HepG2 (cell line): ENCODE measurements at regions of chr9 and their contacts with region 1.

Region 1: DNA sequence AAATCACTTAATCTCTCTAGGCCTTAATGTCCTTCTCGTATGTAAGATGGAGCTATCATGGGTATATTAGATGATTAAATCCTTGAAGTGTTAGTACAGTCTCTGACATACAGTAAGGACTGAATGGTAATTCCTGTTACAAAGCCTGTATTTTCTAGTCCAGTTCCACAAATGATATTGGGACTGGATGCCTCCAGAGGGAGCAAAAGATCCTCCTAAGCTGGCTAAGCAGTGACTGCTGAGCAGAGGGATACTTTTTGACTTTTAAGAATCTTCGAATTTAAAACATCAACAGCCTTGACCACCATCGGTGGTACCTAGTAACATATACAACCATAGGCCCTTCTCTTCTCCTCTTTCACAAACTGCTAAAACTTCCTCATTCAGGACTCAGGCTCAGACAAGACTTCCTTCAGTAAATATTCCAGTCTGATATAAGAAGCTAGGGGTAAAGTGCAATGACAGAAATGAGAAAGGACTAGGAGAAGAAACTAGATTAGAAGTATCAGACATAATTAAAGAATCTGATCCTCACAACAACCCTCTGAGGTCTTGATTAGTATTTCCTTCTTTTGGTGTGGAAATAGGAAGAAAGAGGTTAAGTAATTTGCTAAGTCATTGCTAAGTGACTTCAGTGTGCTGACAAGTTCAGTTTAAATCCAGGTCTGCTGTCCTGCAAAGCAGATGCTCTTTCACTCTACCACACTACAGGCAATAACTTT is 13.9 kb downstream of the PTAR1 start:
- DNase-seq: peak; percentile 14
- ATAC-seq: peak; percentile 20; the same call in 1 of the 3 replicates
- H3K4me3 ChIP-seq: no peak overlapping the region
- H3K27ac ChIP-seq: peak overlapping the region; percentile 66
- H3K4me1 ChIP-seq: peaks cover 60% of the 10 kb centered on the region
- H3K27me3 ChIP-seq: no peaks in the 10 kb centered on the region
- CTCF ChIP-seq: peak; percentile 40
- EP300 ChIP-seq: no peak
- POLR2A ChIP-seq: no peak
- RAD21 ChIP-seq: no peak

Region 2: DNA sequence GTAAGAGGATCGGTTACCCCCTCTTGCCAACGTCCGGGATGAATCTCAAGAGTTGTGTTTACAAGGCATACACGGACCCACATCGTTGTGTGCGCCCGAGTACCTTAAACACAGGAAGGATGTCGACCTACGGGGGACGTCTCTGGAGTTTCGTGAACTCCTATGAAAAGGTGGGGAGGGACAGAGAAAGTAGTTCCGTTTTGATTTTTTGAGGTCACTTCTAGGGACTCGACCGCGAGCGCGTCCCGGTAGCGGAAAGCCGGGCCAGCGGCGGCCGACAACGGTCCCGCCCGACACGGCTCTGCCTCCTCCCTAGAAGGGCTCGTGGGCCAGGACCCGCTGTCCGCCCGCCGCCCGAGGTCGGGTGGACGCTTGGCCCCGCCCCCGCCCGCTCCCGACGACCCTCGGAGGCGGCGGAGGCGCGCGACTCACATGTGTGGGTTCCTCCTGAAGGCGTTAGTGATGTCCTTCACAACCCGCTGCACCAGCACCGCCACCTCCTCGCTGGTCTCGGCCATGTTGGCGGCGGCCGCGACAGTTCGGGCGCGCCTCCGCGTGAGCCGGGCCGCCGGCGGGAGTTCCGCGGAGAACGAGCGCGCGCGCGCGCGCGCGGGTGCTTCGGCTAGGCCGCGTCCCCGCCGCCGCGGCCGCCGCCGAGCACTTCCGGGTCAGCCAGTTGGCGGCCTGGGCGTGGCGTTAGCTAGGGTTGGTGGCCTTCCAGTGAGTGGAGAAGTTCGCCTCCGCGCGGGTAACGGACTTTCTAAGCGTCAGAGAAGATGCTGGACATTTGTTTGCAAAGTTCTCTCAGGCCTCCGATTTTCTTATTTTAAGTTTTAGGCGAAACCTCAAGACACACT is 13.8 kb after region 1 on chr9 and contains the start of gene PTAR1:
- CTCF ChIA-PET with region 1: no interaction called
- POLR2A ChIA-PET with region 1: interaction called, 31 read pairs
- in situ Hi-C with region 1: no loop called
- intact Hi-C with region 1: no loop called
- DNase-seq: peak; percentile 80
- ATAC-seq: peak; percentile 88
- H3K4me3 ChIP-seq: peak within 1 kb of the TSS; percentile 82 to 88 (median 85)
- H3K27ac ChIP-seq: peak within 1 kb of the TSS; percentile 91
- H3K4me1 ChIP-seq: peaks cover 46% of the 10 kb centered on the region
- H3K27me3 ChIP-seq: no peaks in the 10 kb centered on the region; a peak in 1 of 5 replicates
- CTCF ChIP-seq: 0 out of 2 replicates have a peak, but pooled peaks have one; percentile 29
- EP300 ChIP-seq: 0 out of 4 replicates have a peak, but pooled peaks of 1 of the 2 experiments have one; percentile 14
- POLR2A ChIP-seq: peak; percentile 79 to 81
- RAD21 ChIP-seq: peak; percentile 20; the same call in 1 of the 2 replicates
- total RNA-seq, gene PTAR1: 42.1 and 58.0 TPM in 2 replicates

Region 3: DNA sequence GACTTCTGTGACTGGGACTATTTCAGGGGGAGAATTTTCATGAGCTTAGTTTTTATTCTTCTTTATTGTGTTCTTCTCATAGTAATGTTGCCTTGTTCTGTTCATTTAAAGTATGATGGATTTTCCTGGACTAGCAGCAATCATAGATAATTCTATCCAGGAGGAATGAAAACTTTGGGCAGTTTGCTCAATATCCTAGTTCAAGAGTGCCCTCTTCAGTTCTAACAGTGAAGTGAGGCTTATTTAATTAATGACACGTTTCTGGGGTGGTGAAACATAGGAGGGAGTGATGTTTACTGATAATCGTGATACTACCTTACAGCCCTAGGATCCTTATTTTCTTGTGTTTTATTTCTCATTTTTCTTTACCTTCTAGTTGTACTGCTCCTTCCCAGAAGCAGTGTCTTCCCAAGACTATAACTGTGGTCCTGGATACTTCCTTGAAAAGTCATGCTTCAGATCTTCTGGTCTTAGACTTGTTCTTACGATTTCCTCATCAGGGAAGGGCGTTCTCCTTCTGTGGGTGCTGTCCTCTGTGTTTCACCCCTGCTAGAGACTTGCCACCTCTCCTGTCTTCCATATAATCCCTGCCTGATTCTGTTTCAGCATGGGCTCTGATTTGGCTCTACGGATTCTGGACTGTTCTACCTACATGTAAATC is 132.1 kb after region 1 on chr9:
- CTCF ChIA-PET with region 1: interaction called, 4 read pairs
- POLR2A ChIA-PET with region 1: no interaction called
- in situ Hi-C with region 1: no loop called
- intact Hi-C with region 1: loop called (anchors 2 kb)
- DNase-seq: peak; percentile 43
- ATAC-seq: peak; percentile 75
- H3K4me3 ChIP-seq: no peak overlapping the region
- H3K27ac ChIP-seq: no peak overlapping the region
- H3K4me1 ChIP-seq: no peaks in the 10 kb centered on the region
- H3K27me3 ChIP-seq: peaks cover 0 to 4% of the 10 kb centered on the region in 2 experiments; a peak in 1 of 5 replicates
- CTCF ChIP-seq: peak; percentile 71
- EP300 ChIP-seq: no peak
- POLR2A ChIP-seq: no peak
- RAD21 ChIP-seq: peak; percentile 59; the same call in 1 of the 2 replicates